A673 (cell line): ENCODE measurements at regions of chr22 and their contacts with region 1.

Region 1: GRCh38 chr22:31363885-31364465 is 17.8 kb upstream of the PATZ1 start:
- DNase-seq: no peak
- H3K4me3 ChIP-seq: no peak overlapping the region
- H3K27ac ChIP-seq: no peak overlapping the region
- H3K4me1 ChIP-seq: no peaks in the 10 kb centered on the region
- H3K27me3 ChIP-seq: no peaks in the 10 kb centered on the region
- CTCF ChIP-seq: no peak

Region 2: DNA sequence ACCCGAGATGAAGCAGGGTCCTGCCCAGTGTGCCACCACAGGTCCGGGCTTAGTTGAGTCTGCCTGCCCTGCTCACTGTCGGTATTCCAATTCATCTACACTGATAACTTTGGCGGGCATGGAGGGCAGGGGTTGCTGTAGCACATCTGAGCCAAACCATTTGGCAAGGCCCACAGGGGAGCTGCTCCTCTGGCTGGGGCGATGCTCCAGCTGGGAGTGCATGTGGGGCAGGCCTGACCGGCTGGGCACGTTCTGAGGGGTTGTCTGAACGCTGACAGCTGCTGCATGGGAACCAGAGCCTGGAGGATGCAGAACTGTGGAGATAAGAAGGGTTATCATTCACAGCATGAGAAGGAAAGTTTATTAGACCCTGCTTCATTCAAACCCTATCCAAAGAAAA is 75.8 kb after region 1 on chr22:
- CTCF ChIA-PET with region 1: no interaction called
- POLR2A ChIA-PET with region 1: interaction called, 23 read pairs
- intact Hi-C with region 1: no loop called
- DNase-seq: no peak
- H3K4me3 ChIP-seq: no peak overlapping the region
- H3K27ac ChIP-seq: no peak overlapping the region
- H3K4me1 ChIP-seq: no peaks in the 10 kb centered on the region
- H3K27me3 ChIP-seq: no peaks in the 10 kb centered on the region
- CTCF ChIP-seq: no peak